Vagina (tissue), 2 donors: ENCODE measurements at regions of chr17 and their contacts with region 1.

Region 1: GRCh38 chr17:61412143-61412859 is 12.7 kb downstream of the TBX2 start:
- DNase-seq: peak in 1 of 2 donors; percentile 88
- H3K4me3 ChIP-seq: peak overlapping the region; percentile 59 to 78
- H3K27ac ChIP-seq: peak overlapping the region; percentile 68
- H3K4me1 ChIP-seq: peaks cover 74% of the 10 kb centered on the region
- H3K27me3 ChIP-seq: no peaks in the 10 kb centered on the region
- CTCF ChIP-seq: peak; percentile 91 to 96 (median 94)
- POLR2A ChIP-seq: peak in 1 of 2 donors; percentile 33

Region 2: DNA sequence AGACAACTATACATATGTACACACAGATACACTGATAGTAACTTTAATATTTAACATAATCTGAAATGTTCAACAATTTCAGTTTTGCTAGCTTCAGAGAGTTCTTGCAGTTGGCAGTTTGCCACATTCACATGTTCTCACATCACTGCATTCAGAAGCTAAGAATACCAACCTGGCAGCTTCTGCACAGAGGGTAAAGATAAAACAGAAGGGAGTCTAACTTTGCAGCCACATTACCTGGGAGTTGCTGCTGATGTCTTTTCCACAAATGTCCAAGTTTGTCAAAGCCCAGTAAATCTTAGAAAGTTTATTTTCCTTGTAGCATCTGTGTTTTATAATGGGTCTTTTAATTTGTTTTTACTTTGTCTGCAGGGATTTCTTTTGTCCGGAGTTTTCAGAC is 402.6 kb before region 1 on chr17:
- intact Hi-C with region 1: loop called (anchors 5 kb)
- DNase-seq: no peak
- H3K4me3 ChIP-seq: no peak overlapping the region
- H3K27ac ChIP-seq: no peak overlapping the region
- H3K4me1 ChIP-seq: no peaks in the 10 kb centered on the region
- H3K27me3 ChIP-seq: no peaks in the 10 kb centered on the region
- CTCF ChIP-seq: no peak
- POLR2A ChIP-seq: no peak

Region 3: DNA sequence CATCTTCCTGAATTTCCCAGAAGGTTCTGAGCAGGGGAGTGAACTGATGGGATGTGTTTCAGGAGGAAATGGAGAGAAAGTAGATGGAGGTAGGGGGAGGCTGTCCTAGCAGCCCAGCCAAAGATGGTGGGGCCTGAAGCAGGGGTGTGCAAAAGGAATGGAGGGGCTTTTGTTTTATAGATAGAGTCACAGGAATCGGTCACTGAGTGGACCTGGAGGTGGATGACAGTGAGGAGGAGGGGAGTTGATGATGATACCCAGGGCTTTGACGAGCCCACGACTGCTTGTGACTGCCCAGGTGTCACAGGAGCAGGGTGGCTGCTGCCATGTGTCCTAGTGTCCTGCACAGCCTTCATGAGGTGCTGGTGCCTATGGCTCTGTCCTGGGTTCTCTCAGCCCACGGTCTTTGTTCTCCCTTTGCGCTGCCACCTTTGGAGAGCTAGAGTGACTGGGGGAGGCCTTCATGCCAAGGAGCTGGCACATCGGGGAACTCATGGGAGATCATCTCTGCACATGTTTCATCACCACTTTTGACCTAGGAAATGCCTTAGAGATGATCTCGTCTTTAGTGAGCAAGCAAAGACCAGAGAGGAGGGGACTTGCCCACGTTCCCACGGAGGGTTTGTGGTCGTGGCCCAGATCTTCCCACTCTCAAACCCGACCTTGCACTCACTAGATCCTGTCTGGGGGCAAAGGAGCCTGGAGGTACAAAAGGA is 63.3 kb after region 1 on chr17:
- intact Hi-C with region 1: no loop called
- DNase-seq: no peak
- H3K4me3 ChIP-seq: no peak overlapping the region
- H3K27ac ChIP-seq: no peak overlapping the region
- H3K4me1 ChIP-seq: peaks cover 7% of the 10 kb centered on the region
- H3K27me3 ChIP-seq: no peaks in the 10 kb centered on the region
- CTCF ChIP-seq: no peak
- POLR2A ChIP-seq: no peak

Region 4: GRCh38 chr17:61536436-61536955 is 124.2 kb after region 1 on chr17:
- intact Hi-C with region 1: no loop called
- DNase-seq: no peak
- H3K4me3 ChIP-seq: no peak overlapping the region
- H3K27ac ChIP-seq: no peak overlapping the region
- H3K4me1 ChIP-seq: no peaks in the 10 kb centered on the region
- H3K27me3 ChIP-seq: no peaks in the 10 kb centered on the region
- CTCF ChIP-seq: no peak
- POLR2A ChIP-seq: no peak

Region 5: DNA sequence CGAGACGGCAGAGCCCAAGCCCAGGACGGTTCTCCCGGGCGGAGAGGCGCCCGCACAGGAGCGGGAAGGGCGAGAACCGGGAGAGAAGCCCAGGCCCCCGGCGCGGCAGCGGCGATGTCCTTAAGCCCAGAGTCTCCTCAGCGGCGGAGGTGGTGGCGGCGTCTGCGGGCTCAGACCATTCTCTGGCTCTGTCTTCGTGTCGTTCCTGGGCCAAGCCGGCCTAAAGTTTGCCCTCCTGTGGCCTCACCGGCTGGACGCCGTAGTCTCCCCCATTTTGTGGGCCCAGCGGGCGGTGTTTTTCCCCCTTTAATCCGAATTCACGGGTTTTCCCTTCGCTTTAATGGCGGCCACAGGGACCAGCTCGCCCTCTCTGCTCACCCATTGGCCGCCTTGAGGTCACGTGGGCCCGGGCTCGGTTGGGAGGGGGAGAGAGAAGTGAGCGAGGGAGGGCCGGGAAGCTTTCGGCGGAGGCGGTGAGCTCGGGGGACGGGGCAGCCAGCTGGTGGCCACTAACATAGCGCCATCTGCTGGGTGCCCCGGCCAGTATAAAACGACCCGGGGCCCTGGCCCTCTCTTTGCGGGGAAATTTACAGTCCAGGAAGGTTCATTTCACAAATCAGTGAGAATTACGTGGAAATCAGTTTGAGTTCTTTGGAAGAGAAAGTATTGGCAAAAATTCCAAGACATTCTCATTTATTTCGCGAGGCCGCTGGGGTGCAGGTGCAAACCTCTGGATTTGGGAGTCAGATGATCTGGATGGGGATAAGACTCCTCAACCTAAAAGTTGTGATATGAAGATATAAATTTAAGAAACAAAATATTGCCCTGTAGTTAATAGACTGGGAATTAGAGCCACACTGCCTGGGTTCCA is 653.5 kb after region 1 on chr17:
- intact Hi-C with region 1: loop called (anchors 10 kb)
- DNase-seq: peak; percentile 97 to 98
- H3K4me3 ChIP-seq: peak overlapping the region; percentile 62 to 98
- H3K27ac ChIP-seq: peak overlapping the region; percentile 99
- H3K4me1 ChIP-seq: peaks cover 42% of the 10 kb centered on the region
- H3K27me3 ChIP-seq: no peaks in the 10 kb centered on the region
- CTCF ChIP-seq: peak; percentile 75 to 97 (median 88)
- POLR2A ChIP-seq: peak in 1 of 2 donors; percentile 79